ENCODE measurements at regions of chr4 and their contacts with region 1.

Region 1: GRCh38 chr4:75844151-75844662 is 58.0 kb downstream of the PPEF2 start:
- DNase-seq: peak; percentile 93
- H3K4me3 ChIP-seq: no peak overlapping the region
- CTCF ChIP-seq: no peak

Region 2: DNA sequence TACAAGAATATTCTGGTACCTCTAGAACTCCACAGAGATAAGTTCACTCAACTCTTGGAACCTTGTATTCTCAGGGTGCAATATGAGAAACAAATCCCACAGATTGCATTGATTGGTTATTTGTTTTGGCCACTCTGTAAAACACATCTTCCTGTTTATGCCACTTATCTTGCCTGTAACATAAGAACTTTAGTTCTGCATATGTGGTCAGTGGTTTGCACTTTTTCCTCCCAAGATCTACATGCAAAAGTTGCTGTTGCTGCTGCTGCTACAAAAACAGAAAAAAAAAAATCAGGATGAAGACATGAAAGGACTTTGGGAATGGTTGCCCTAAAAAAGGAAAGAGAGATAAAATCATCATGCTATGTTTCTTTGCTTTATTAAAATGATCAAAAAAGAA is 278.7 kb before region 1 on chr4:
- CTCF ChIA-PET with region 1: interaction called, 11 read pairs
- POLR2A ChIA-PET with region 1: no interaction called
- DNase-seq: no peak
- H3K4me3 ChIP-seq: no peak overlapping the region
- CTCF ChIP-seq: no peak

Region 3: DNA sequence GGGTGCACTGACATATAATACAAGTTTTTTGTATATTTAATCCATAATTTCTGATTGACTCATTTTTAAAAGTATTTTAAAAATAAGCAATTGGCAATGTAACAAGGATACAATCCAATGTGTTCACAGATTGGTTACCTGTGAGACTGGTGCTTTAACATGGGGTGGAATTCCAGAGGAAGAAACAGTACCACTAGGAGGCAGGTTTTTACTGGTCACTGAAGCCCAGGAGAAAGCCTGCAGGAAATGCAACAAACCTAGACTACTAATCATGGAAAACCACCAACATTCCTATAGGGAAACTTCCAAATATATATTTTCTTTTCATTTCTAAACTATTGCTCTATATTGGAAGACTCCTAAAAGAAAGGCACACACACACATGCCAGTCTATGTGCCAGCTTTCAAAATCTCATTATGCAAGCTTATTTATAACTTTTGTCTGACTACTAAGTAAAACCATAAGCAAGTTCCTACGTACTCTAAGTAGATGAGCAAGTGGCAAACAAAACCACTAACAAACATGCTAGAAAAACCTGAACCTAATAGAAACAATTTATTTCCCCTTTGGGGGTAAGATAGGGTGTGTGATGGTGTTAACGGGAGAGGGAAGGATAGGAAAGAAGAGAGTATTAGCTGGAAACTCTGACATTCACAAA is 190.2 kb before region 1 on chr4:
- CTCF ChIA-PET with region 1: interaction called, 12 read pairs
- POLR2A ChIA-PET with region 1: no interaction called
- DNase-seq: no peak
- H3K4me3 ChIP-seq: no peak overlapping the region
- CTCF ChIP-seq: peak; percentile 48